Heart left ventricle (tissue), 16 donors: ENCODE measurements at regions of chr11 and their contacts with region 1.

Region 1: DNA sequence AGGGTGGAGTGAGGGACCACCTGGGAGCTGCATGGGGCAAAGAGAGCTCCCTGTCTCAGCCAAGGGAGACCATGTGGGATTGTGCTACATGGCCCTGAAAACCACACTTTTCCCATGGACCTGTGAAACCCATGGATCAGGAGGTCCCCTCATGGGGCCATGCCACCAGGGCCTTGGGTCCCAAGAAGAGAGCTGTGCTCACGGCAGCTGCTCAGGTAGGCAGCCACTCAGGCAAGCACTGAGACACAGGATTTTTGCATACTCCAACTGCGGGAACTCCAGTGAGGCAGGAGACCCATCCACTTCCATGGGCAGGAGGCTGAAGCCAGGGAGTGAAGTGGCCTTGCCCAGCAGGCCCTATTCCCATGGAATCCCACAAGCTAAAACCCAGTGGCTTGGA is 190.0 kb downstream of the KCNA4 start:
- DNase-seq: peak in 1 of 5 donors; percentile 32
- ATAC-seq: no peak
- H3K4me3 ChIP-seq: no peak overlapping the region
- H3K27ac ChIP-seq: no peak overlapping the region
- H3K4me1 ChIP-seq: no peaks in the 10 kb centered on the region
- H3K27me3 ChIP-seq: no peaks in the 10 kb centered on the region
- CTCF ChIP-seq: no peak
- POLR2A ChIP-seq: no peak

Region 2: DNA sequence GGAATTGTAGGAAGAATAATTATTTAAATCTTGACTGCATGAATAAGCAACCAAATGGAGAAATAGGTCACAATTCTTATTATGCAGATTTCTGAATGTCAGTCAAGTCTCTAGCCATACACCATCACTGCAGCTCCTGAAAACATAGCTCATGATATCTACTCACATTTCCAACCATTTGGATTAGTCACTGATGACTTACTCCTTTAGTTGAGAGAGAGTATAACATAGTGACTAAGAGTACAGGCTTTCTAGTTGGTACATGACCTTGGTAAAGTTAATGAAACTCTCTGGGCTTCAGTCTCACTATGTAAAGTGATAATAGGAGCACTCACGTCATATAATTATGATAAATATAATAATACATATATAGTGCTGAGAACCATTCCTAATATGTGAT is 75.3 kb before region 1 on chr11:
- intact Hi-C with region 1: no loop called
- DNase-seq: no peak
- ATAC-seq: no peak
- H3K4me3 ChIP-seq: no peak overlapping the region
- H3K27ac ChIP-seq: no peak overlapping the region
- H3K4me1 ChIP-seq: no peaks in the 10 kb centered on the region
- H3K27me3 ChIP-seq: no peaks in the 10 kb centered on the region
- CTCF ChIP-seq: no peak
- POLR2A ChIP-seq: no peak

Region 3: DNA sequence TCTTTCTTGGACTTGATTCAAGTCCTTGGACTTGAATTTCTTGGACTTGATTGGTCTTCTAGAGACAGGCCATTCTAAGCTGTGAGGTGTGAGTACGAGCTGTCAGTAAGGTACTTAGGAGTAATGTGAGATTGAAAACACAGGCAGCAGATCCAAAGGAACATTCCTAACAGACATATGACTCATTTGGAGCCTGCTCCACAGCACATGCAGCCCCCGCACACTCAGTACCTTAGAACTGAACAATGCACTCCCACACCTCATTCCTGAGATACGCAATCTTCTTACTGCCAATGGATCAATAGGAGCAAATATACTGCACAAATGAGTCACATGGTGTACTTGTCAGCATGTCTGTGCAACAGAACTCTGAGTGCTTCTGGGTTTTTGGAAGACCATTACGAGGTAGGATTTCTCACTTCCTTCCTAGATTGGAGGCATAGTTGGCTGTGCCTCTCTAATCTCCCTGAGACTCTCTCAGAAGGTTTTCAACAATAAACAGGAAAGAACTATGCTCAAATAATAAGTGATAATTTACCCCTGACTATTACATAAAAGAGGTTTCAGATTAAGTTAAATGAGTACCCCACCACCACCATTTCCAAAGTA is 53.1 kb before region 1 on chr11:
- intact Hi-C with region 1: no loop called
- DNase-seq: peak in 4 of 5 donors; percentile 23 to 63 (median 43)
- ATAC-seq: peak; percentile 98 to 100 (median 100)
- H3K4me3 ChIP-seq: no peak overlapping the region
- H3K27ac ChIP-seq: peak overlapping the region in 11 of 12 donors; percentile 26 to 80 (median 60)
- H3K4me1 ChIP-seq: peaks cover 0 to 14% (median 0%) of the 10 kb centered on the region in 12 donors
- H3K27me3 ChIP-seq: no peaks in the 10 kb centered on the region
- CTCF ChIP-seq: no peak
- POLR2A ChIP-seq: no peak

Region 4: DNA sequence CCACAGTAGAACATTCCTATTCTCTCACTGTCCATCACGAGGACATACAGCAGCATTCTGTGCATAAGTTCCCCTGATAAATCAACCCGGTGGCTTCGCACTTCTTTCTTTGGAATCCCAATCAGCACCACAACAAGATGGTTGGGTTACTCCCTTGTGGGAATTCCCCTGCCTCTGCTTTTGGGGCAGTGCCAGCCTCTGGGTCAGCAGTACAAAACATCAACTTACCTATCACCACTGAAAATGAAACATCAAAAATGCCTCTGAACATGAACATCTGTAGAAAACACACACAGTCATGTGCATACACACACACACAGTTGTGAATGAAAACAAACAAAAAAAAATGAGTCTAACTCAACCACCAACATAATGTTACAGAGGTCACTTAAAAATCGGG is 110.6 kb after region 1 on chr11:
- intact Hi-C with region 1: no loop called
- DNase-seq: no peak
- ATAC-seq: no peak
- H3K4me3 ChIP-seq: no peak overlapping the region
- H3K27ac ChIP-seq: no peak overlapping the region
- H3K4me1 ChIP-seq: no peaks in the 10 kb centered on the region
- H3K27me3 ChIP-seq: no peaks in the 10 kb centered on the region
- CTCF ChIP-seq: no peak
- POLR2A ChIP-seq: no peak

Region 5: DNA sequence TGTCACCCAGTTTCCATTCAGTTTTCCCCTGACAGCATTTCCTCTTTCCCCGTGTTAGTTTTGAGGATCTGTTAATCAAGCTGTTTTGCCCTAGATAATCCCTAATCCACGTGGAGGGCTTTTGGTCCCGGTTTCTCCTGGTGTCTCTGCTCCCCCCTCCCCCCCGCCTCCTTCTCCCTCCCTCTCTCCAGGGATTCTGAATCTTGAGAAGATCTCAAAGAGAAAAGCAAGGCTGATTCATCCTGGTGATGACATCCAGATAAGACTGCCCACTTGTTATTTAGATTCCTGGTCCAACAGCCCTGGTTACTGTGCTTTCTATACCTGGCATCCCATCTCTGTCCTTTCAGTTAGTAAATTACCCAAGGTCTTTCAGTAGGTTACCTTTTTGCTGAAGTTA is 130.6 kb after region 1 on chr11:
- intact Hi-C with region 1: no loop called
- DNase-seq: no peak
- ATAC-seq: no peak
- H3K4me3 ChIP-seq: no peak overlapping the region
- H3K27ac ChIP-seq: no peak overlapping the region
- H3K4me1 ChIP-seq: no peaks in the 10 kb centered on the region
- H3K27me3 ChIP-seq: no peaks in the 10 kb centered on the region
- CTCF ChIP-seq: no peak
- POLR2A ChIP-seq: no peak

Region 6: DNA sequence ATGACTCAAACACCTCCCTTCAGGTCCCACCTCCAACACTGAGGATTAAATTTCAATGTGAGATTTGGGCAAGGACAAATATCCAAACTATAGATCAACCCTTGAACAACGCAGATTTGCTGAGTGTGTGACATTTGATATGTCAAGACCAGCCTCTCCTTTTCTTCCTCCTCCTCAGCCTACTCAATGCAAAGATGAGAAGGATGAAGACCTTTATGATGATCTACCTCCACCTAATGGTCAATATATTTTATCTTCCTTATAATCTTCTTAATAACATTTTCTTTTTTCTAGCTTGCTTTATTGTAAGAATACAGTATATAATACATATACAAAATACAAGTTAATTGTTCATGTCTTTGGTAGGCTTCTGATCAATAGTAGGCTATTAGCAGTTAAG is 826.7 kb after region 1 on chr11:
- intact Hi-C with region 1: loop called in 1 of 10 experiments (anchors 10 kb)
- DNase-seq: no peak
- ATAC-seq: no peak
- H3K4me3 ChIP-seq: no peak overlapping the region
- H3K27ac ChIP-seq: no peak overlapping the region
- H3K4me1 ChIP-seq: no peaks in the 10 kb centered on the region
- H3K27me3 ChIP-seq: no peaks in the 10 kb centered on the region
- CTCF ChIP-seq: peak in 3 of 12 donors; percentile 34 to 41 (median 36)
- POLR2A ChIP-seq: no peak